Head of caudate nucleus (tissue), 42 donors: ENCODE measurements at regions of chr9 and their contacts with region 1.

Region 1: DNA sequence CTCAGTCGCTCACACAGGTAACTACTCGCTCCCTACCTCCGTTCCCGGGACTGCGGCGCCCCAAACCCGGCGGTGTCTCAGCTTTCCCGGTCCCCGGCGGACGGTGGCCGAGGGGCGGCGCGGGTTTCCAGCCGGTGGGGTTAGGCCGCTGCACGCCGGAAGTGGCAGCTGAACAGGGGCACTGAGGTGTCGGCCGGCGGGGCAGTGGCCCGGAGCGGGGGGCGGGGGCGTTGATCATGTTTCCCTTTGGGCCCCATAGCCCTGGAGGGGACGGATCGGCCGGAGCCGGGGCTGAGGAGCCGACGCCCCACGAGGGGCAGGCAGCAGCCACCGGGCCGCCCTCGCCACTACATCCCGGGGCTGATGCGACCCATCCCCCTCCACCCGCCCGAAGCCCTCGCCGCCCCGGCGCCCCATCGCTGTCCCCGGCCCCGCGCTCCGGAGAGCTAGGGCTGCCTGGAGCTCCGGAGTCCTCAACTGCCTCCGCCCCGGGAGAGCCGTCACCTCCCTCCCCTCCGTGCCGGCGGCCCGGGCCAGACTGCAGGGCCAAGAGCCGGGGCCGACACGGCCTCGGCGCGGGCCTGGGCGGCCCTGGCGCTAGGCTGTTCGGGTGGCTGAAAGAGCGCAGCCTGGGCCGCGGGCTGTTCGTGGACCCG is at the start of gene DCAF10:
- DNase-seq: peak; percentile 64 to 96 (median 90)

Region 2: GRCh38 chr9:37753489-37754190 is 47.1 kb before region 1 on chr9 and contains the start of gene TRMT10B:
- intact Hi-C with region 1: loop called (anchors 10 kb)
- DNase-seq: peak; percentile 48 to 89 (median 76)

Region 3: DNA sequence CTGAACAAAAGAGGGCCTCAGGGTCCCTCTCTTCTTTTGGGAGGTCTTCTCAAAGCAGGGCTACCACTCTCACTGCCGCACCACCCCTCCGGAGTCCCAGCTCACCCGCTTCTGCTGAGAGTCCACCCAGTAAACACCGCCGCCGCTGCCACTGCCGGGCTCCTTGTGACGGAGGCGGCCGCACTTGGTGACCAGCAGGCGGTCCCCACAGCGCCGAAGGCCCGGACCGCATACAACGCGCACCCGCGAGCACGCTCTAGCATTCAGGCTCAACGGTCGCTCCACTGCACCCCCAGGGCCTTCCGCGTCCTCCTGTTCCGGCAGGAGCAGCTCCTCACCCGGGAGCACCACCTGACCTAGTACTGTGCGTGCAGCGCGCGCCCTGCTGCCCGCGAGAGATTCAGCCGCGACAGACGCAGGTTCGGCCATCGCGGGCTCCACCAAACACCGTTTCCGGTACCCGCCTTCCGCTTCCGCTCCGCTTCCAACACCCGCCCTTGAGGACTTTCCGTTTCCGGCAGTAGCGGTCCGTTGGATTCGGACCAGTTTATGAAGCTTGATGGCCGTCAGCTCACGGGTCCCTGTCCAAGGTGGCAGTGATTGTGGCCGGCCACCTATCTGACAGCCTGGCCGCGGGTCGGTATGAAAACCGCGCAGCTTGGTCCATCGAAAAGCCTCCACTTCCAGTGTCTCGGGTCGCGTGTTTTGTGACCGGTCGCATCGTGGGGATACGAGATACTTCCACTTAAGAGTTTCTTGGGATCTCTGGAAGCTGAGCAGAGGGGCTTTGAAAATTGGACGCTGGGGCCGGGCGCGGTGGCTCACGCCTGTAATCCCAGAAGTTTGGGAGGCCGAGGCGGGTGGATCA is 15.9 kb before region 1 on chr9 and contains the start of gene EXOSC3:
- intact Hi-C with region 1: loop called (anchors 1 kb)
- DNase-seq: peak; percentile 85 to 97 (median 92)